GM12878 (cell line): ENCODE measurements at regions of chr1 and their contacts with region 1.

Region 1: DNA sequence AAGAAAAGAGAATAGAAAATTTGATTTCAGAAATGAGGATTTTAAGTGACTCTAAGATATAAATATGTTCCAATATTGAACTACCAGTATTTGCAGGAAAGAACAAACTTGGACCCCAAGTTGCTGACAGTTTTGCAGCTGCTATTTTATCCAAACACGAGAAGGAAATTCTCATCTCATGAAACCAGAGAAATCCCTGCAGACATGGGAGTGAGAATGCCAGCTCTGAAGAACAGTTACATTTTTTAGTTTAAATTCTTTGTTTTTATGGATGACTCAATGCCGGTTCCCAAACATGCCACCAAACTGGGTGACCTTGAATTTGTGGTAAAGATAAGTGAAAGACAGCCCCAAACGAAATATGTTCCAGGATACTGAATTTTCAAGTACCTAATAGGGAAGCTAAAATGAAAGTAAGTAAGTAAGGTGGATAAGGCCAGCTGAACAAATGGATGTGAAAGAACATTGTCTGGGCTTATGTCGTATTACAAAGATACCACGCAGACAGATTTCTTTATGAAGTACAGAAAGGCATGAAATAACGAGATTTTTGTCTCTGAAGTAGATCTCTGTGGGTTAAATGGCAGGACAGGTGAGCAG is 19.9 kb downstream of the TLR5 start:
- DNase-seq: no peak
- ATAC-seq: no peak
- H3K4me3 ChIP-seq: no peak overlapping the region
- H3K27ac ChIP-seq: no peak overlapping the region
- H3K4me1 ChIP-seq: no peaks in the 10 kb centered on the region
- H3K27me3 ChIP-seq: no peaks in the 10 kb centered on the region; a peak in 1 of 4 replicates
- CTCF ChIP-seq: no peak
- EP300 ChIP-seq: no peak
- POLR2A ChIP-seq: no peak
- RAD21 ChIP-seq: no peak

Region 2: GRCh38 chr1:222750651-222751050 is 372.5 kb before region 1 on chr1:
- CTCF ChIA-PET with region 1: interaction called, 11 read pairs
- POLR2A ChIA-PET with region 1: no interaction called
- RAD21 ChIA-PET with region 1: no interaction called
- SMC1A ChIA-PET with region 1: no interaction called
- in situ Hi-C with region 1: no loop called
- intact Hi-C with region 1: no loop called
- DNase-seq: no peak
- ATAC-seq: peak; percentile 85
- H3K4me3 ChIP-seq: no peak overlapping the region
- H3K27ac ChIP-seq: no peak overlapping the region
- H3K4me1 ChIP-seq: peaks cover 6% of the 10 kb centered on the region
- H3K27me3 ChIP-seq: no peaks in the 10 kb centered on the region
- CTCF ChIP-seq: no peak
- EP300 ChIP-seq: no peak
- POLR2A ChIP-seq: no peak
- RAD21 ChIP-seq: no peak

Region 3: GRCh38 chr1:223087291-223088255 is 35.5 kb before region 1 on chr1:
- CTCF ChIA-PET with region 1: interaction called, 35 read pairs
- POLR2A ChIA-PET with region 1: no interaction called
- RAD21 ChIA-PET with region 1: interaction called, 8 read pairs
- SMC1A ChIA-PET with region 1: interaction called, 9 read pairs
- in situ Hi-C with region 1: no loop called
- intact Hi-C with region 1: no loop called
- DNase-seq: no peak
- ATAC-seq: no peak
- H3K4me3 ChIP-seq: no peak overlapping the region
- H3K27ac ChIP-seq: no peak overlapping the region
- H3K4me1 ChIP-seq: no peaks in the 10 kb centered on the region
- H3K27me3 ChIP-seq: no peaks in the 10 kb centered on the region; a peak in 2 of 4 replicates
- CTCF ChIP-seq: no peak
- EP300 ChIP-seq: no peak
- POLR2A ChIP-seq: no peak
- RAD21 ChIP-seq: no peak

Region 4: GRCh38 chr1:223102797-223103533 is 20.1 kb before region 1 on chr1:
- CTCF ChIA-PET with region 1: interaction called, 21 read pairs
- POLR2A ChIA-PET with region 1: no interaction called
- RAD21 ChIA-PET with region 1: no interaction called
- SMC1A ChIA-PET with region 1: interaction called, 6 read pairs
- in situ Hi-C with region 1: no loop called
- intact Hi-C with region 1: no loop called
- DNase-seq: no peak
- ATAC-seq: no peak
- H3K4me3 ChIP-seq: no peak overlapping the region
- H3K27ac ChIP-seq: no peak overlapping the region
- H3K4me1 ChIP-seq: no peaks in the 10 kb centered on the region
- H3K27me3 ChIP-seq: no peaks in the 10 kb centered on the region
- CTCF ChIP-seq: no peak
- EP300 ChIP-seq: no peak
- POLR2A ChIP-seq: no peak
- RAD21 ChIP-seq: no peak

Region 5: DNA sequence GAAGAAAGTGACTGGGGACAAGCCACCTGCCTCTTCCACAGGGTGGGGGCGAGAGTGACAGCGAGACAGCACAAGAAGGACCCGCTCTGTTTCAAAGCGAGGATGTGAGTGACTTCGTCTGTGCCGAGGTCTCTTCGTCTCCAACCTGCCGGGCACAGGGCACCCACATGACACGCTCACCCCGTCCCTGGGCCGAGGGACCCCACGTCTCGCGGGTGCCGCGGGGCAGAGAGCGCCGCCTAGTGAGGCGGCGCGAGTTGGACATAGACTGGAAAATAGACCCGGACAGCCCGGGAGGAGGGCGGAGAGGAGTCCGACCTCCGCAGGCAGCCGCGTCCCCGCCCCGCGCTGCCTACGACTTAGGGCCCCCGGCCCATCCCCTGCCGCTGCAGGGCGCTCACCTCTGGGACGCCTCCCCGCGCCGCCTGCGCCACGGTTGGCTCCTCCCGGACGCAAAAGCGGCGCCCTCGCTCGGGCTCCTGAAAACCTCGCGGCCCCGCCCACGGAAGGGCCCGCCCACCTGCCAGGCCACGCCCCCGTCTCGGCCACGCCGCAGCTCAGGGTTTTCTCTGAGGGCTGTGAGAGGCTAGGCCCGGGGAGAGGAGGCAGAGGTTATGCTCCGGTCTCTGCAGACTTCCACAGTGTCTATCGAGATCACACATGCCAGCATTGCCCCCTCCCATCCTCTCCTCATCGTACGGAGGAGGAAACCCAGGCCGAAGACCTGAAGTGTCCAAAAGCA is 19.9 kb after region 1 on chr1 and contains the start of gene TLR5:
- CTCF ChIA-PET with region 1: interaction called, 88 read pairs
- POLR2A ChIA-PET with region 1: interaction called, 6 read pairs
- RAD21 ChIA-PET with region 1: interaction called, 8 read pairs
- SMC1A ChIA-PET with region 1: interaction called, 8 read pairs
- in situ Hi-C with region 1: no loop called
- intact Hi-C with region 1: no loop called
- DNase-seq: peak; percentile 12
- ATAC-seq: peak; percentile 91
- H3K4me3 ChIP-seq: peak within 1 kb of the TSS; percentile 45
- H3K27ac ChIP-seq: no peak within 1 kb of the TSS
- H3K4me1 ChIP-seq: peaks cover 12% of the 10 kb centered on the region
- H3K27me3 ChIP-seq: no peaks in the 10 kb centered on the region
- CTCF ChIP-seq: peak; percentile 40 to 68 (median 44)
- EP300 ChIP-seq: no peak
- POLR2A ChIP-seq: peak; percentile 52; the same call in 1 of the 2 replicates
- RAD21 ChIP-seq: no peak
- polyA plus RNA-seq, gene TLR5: 0.34 to 0.51 TPM

Region 6: DNA sequence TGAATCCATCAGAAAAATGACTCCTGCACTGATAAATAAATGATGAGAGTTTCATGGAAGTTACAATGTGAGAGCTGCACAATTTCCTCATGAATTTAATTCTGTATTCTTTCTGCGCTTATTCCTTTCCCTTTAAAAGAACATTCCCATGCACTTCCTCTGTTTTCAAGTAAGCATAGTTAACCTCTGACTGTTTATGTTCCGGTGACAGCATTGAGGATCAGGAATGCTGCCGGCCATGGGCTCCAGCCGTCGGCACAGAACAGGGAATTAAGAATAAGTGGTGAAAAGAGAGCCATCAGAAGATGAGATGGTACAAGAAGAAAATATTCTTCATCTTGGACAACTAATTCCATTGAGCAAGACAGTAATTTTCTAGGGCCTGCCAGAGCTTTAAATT is 175.6 kb after region 1 on chr1:
- CTCF ChIA-PET with region 1: no interaction called
- POLR2A ChIA-PET with region 1: no interaction called
- RAD21 ChIA-PET with region 1: no interaction called
- SMC1A ChIA-PET with region 1: no interaction called
- in situ Hi-C with region 1: no loop called
- intact Hi-C with region 1: no loop called
- DNase-seq: no peak
- ATAC-seq: no peak
- H3K4me3 ChIP-seq: no peak overlapping the region
- H3K27ac ChIP-seq: no peak overlapping the region
- H3K4me1 ChIP-seq: no peaks in the 10 kb centered on the region
- H3K27me3 ChIP-seq: no peaks in the 10 kb centered on the region; a peak in 2 of 4 replicates
- CTCF ChIP-seq: no peak
- EP300 ChIP-seq: no peak
- POLR2A ChIP-seq: no peak
- RAD21 ChIP-seq: no peak